ENCODE measurements at regions of chr1 and their contacts with region 1.

Region 1: GRCh38 chr1:205523891-205524793 is 19.7 kb downstream of the CDK18 start:
- DNase-seq: peak; percentile 63 to 94
- H3K4me3 ChIP-seq: no peak overlapping the region
- H3K27ac ChIP-seq: no peak overlapping the region
- H3K4me1 ChIP-seq: peaks cover under 1 to 27% (median 12%) of the 10 kb centered on the region in 4 experiments
- H3K27me3 ChIP-seq: no peaks in the 10 kb centered on the region
- CTCF ChIP-seq: peak; percentile 73 to 94 (median 93)
- EP300 ChIP-seq: no peak
- POLR2A ChIP-seq: no peak
- RAD21 ChIP-seq: peak; percentile 96 to 97

Region 2: GRCh38 chr1:205273551-205273982 is 250.6 kb before region 1 on chr1:
- CTCF ChIA-PET with region 1: interaction called, 10 read pairs
- POLR2A ChIA-PET with region 1: no interaction called
- DNase-seq: peak; percentile 83 to 94
- H3K4me3 ChIP-seq: no peak overlapping the region
- H3K27ac ChIP-seq: 0 out of 2 replicates have a peak overlapping the region, but pooled peaks have one; percentile 0
- H3K4me1 ChIP-seq: peaks cover 5 to 19% (median 11%) of the 10 kb centered on the region in 4 experiments; a peak in 6 of 7 replicates
- H3K27me3 ChIP-seq: no peaks in the 10 kb centered on the region
- CTCF ChIP-seq: peak in 2 of 3 experiments; percentile 96 to 100; a peak in 3 of 4 replicates
- EP300 ChIP-seq: no peak
- POLR2A ChIP-seq: no peak
- RAD21 ChIP-seq: peak; percentile 99 to 100

Region 3: GRCh38 chr1:205354259-205354904 is 169.8 kb before region 1 on chr1:
- CTCF ChIA-PET with region 1: interaction called, 65 read pairs
- POLR2A ChIA-PET with region 1: interaction called, 3 read pairs
- DNase-seq: peak in 1 of 2 experiments; percentile 69
- H3K4me3 ChIP-seq: no peak overlapping the region
- H3K27ac ChIP-seq: no peak overlapping the region
- H3K4me1 ChIP-seq: peaks cover 22 to 47% (median 31%) of the 10 kb centered on the region in 4 experiments
- H3K27me3 ChIP-seq: no peaks in the 10 kb centered on the region
- CTCF ChIP-seq: peak in 2 of 3 experiments; percentile 75 to 84; a peak in 3 of 4 replicates
- EP300 ChIP-seq: no peak
- POLR2A ChIP-seq: no peak
- RAD21 ChIP-seq: peak; percentile 56 to 66

Region 4: GRCh38 chr1:205416322-205416721 is 107.8 kb before region 1 on chr1:
- CTCF ChIA-PET with region 1: interaction called, 16 read pairs
- POLR2A ChIA-PET with region 1: interaction called, 3 read pairs
- DNase-seq: no peak
- H3K4me3 ChIP-seq: no peak overlapping the region
- H3K27ac ChIP-seq: no peak overlapping the region
- H3K4me1 ChIP-seq: no peaks in the 10 kb centered on the region
- H3K27me3 ChIP-seq: no peaks in the 10 kb centered on the region
- CTCF ChIP-seq: no peak
- EP300 ChIP-seq: no peak
- POLR2A ChIP-seq: no peak
- RAD21 ChIP-seq: no peak

Region 5: GRCh38 chr1:205449750-205450443 is 74.2 kb before region 1 on chr1:
- CTCF ChIA-PET with region 1: interaction called, 27 read pairs
- POLR2A ChIA-PET with region 1: interaction called, 5 read pairs
- DNase-seq: peak in 1 of 2 experiments; percentile 77
- H3K4me3 ChIP-seq: peak overlapping the region; percentile 14 to 52 (median 28); a peak in 5 of 8 replicates
- H3K27ac ChIP-seq: no peak overlapping the region; the same call in 1 of the 2 replicates
- H3K4me1 ChIP-seq: peaks cover 46 to 88% (median 62%) of the 10 kb centered on the region in 4 experiments
- H3K27me3 ChIP-seq: peaks cover 0 to 5% (median 1%) of the 10 kb centered on the region in 4 experiments; a peak in 2 of 7 replicates
- CTCF ChIP-seq: peak in 1 of 3 experiments; percentile 4; a peak in 1 of 4 replicates
- EP300 ChIP-seq: no peak
- POLR2A ChIP-seq: peak in 1 of 2 experiments; percentile 45; a peak in 1 of 3 replicates
- RAD21 ChIP-seq: no peak

Region 6: DNA sequence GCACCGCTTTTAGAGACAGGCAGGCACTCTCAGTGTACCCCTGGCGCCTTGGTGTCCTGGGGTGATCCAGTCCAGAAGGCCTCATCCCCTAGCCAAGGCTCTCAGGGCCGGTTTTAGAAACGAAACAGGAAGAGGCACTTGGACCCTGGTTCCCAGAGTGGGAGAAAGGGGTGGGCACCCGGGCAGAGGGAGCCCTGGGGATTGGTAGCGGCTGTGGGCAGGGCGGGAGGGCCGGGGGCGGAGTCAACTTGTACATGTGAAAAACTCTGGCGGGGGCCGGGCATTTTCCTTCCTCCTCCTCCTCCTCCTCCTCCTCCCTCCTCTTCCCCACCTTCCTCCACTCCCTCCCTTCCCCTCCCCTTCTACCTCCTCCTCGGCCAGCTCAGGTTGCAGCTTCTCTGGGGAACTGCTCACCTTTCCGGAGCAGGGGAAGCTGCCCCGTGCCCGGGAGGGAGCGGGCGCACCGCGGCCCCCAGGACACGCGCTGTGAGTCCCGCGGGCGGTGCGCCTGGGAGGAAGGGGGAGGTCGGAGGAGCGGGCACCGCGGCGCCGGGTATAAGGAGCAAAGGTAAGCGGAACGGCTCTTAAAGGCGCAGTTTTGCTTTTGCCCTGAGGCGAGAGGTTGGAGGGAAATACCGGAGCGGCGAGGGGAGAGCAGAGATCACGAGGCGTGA is 19.7 kb before region 1 on chr1 and contains the start of gene CDK18:
- CTCF ChIA-PET with region 1: interaction called, 1,626 read pairs
- POLR2A ChIA-PET with region 1: interaction called, 17 read pairs
- DNase-seq: peak; percentile 69 to 85
- H3K4me3 ChIP-seq: peak within 1 kb of the TSS; percentile 44 to 88 (median 86)
- H3K27ac ChIP-seq: peak within 1 kb of the TSS; percentile 49; the same call in 1 of the 2 replicates
- H3K4me1 ChIP-seq: peaks cover 0 to 29% (median 16%) of the 10 kb centered on the region in 4 experiments; a peak in 6 of 7 replicates
- H3K27me3 ChIP-seq: no peaks in the 10 kb centered on the region
- CTCF ChIP-seq: no peak
- EP300 ChIP-seq: no peak; a peak in 1 of 3 replicates
- POLR2A ChIP-seq: peak in 1 of 2 experiments; percentile 66; a peak in 1 of 3 replicates
- RAD21 ChIP-seq: no peak
- total RNA-seq, gene CDK18: 40.9 and 44.0 TPM in 2 replicates

Region 7: DNA sequence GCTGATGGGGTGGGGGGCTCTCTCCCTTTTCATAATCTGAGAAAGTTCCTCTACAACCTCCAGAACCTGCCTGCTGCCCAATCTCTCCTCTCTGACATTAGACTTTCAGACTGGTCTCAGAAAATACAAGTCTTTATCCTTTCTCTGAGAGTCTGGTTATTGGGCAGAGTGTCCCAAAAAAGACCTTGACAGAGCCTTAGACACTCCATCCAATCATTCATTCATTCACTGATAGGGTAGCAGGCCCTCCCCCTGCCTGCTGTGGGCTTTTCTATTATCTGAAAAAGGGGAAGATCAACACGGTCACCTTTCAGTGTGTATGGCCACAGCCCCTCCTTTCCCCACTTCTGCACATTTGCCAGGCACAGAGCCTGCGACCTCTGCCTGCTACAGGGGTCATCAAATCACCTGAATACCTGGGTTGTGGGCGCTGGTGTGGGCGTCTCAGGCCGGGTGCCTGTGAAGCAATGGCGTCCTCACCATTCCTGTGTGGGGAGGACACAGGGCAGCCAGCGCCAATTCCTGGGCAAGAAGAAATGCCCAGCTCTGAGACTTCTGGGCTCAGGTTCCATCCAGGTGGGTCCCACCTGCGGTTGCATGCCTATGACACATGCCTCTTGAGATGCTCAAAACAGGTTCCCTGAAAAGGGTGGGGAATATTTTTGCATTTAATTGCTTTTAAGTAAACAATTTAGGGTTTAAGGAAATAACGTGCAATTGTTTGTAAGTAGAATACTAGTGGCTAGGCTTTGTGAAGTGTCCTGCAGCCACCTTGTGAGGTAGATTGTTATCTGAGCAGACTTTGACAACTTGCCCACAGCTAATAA is 54.9 kb after region 1 on chr1:
- CTCF ChIA-PET with region 1: interaction called, 22 read pairs
- POLR2A ChIA-PET with region 1: no interaction called
- DNase-seq: no peak
- H3K4me3 ChIP-seq: no peak overlapping the region
- H3K27ac ChIP-seq: no peak overlapping the region
- H3K4me1 ChIP-seq: peaks cover 0 to 11% (median 0%) of the 10 kb centered on the region in 4 experiments; a peak in 4 of 7 replicates
- H3K27me3 ChIP-seq: peaks cover 0 to 8% (median 3%) of the 10 kb centered on the region in 4 experiments; a peak in 4 of 7 replicates
- CTCF ChIP-seq: no peak
- EP300 ChIP-seq: no peak
- POLR2A ChIP-seq: no peak
- RAD21 ChIP-seq: no peak

Region 8: GRCh38 chr1:205626216-205626615 is 102.1 kb after region 1 on chr1:
- CTCF ChIA-PET with region 1: no interaction called
- POLR2A ChIA-PET with region 1: no interaction called
- DNase-seq: no peak
- H3K4me3 ChIP-seq: no peak overlapping the region
- H3K27ac ChIP-seq: no peak overlapping the region
- H3K4me1 ChIP-seq: no peaks in the 10 kb centered on the region; a peak in 2 of 7 replicates
- H3K27me3 ChIP-seq: no peaks in the 10 kb centered on the region
- CTCF ChIP-seq: no peak
- EP300 ChIP-seq: no peak
- POLR2A ChIP-seq: no peak
- RAD21 ChIP-seq: no peak

Region 9: GRCh38 chr1:205766038-205766437 is 241.9 kb after region 1 on chr1:
- CTCF ChIA-PET with region 1: no interaction called
- POLR2A ChIA-PET with region 1: no interaction called
- DNase-seq: no peak
- H3K4me3 ChIP-seq: no peak overlapping the region
- H3K27ac ChIP-seq: no peak overlapping the region
- H3K4me1 ChIP-seq: no peaks in the 10 kb centered on the region
- H3K27me3 ChIP-seq: no peaks in the 10 kb centered on the region
- CTCF ChIP-seq: no peak
- EP300 ChIP-seq: no peak
- POLR2A ChIP-seq: no peak
- RAD21 ChIP-seq: no peak